Activated T-helper 2 cell treated with anti-CD3 and anti-CD28 coated beads, Interferon-gamma antibody, Interleukin-2, Interleukin-4, amounts not matched to agents 10 μg/mL and 5 μg/mL and 100 μg/mL, durations not matched to agents 14 hours and 24 hours and 36 hours (primary cell): ENCODE measurements at regions of chr19 and their contacts with region 1.

Region 1: GRCh38 chr19:43784981-43785808 is 4.4 kb upstream of the KCNN4 start:
- DNase-seq: peak; percentile 36
- H3K4me3 Mint-ChIP-seq: peak overlapping the region; percentile 55
- H3K27ac Mint-ChIP-seq: peak overlapping the region; percentile 82
- H3K4me1 Mint-ChIP-seq: peaks cover 41% of the 10 kb centered on the region
- H3K27me3 Mint-ChIP-seq: peaks cover 5% of the 10 kb centered on the region

Region 2: GRCh38 chr19:43446746-43447489 is 338.3 kb before region 1 on chr19:
- intact Hi-C with region 1: loop called (anchors 10 kb)
- DNase-seq: peak; percentile 67
- H3K4me3 Mint-ChIP-seq: no peak overlapping the region
- H3K27ac Mint-ChIP-seq: no peak overlapping the region
- H3K4me1 Mint-ChIP-seq: peaks cover 16% of the 10 kb centered on the region
- H3K27me3 Mint-ChIP-seq: no peaks in the 10 kb centered on the region

Region 3: GRCh38 chr19:43526884-43527859 is 258.0 kb before region 1 on chr19 and contains the start of gene ETHE1:
- intact Hi-C with region 1: loop called (anchors 10 kb)
- DNase-seq: peak; percentile 76
- H3K4me3 Mint-ChIP-seq: peak within 1 kb of the TSS; percentile 87
- H3K27ac Mint-ChIP-seq: peak within 1 kb of the TSS; percentile 97
- H3K4me1 Mint-ChIP-seq: peaks cover 12% of the 10 kb centered on the region
- H3K27me3 Mint-ChIP-seq: no peaks in the 10 kb centered on the region
- total RNA-seq, gene ETHE1: 64.6 and 65.5 TPM in 2 replicates

Region 4: DNA sequence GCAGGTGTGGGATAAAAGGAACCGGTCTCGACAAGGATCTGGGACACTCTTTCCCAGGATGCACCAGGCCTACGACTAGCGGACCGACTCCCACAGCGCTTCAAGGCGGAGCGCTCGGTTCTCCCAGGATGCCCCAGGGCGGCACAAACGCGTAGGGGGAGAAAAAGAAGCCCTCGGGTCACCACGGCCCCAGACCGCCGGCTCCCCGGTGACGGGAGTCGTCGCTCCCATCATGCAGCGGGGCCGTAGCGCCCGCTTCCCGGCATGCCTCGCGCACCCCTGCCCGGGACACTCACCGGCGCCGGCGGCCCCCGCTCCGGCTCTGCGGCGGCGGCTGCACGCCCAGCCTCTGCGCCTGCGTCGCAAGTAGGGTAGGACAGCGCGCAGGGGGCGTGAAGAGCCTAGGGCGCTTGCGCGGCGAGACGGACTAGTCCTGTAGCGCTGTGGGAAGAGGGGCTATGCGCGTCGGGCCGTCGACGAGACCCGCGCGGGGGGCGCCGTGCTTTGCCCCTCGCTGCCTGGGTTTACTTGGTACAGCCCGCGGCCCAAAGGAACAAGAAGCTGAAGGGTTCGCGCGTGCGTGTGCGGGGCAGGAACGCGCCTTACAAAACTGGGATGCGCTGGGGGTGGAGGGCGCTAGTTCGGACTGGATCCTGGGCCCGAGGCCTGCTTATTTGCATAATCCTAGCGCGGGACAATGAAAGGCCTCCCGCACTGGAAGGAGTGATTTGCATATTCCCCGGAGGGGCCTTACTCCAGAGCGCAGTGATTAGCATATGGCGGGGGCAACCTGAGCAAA is 165.7 kb before region 1 on chr19 and contains the start of gene ZNF428:
- intact Hi-C with region 1: no loop called
- DNase-seq: peak; percentile 86
- H3K4me3 Mint-ChIP-seq: peak within 1 kb of the TSS; percentile 90
- H3K27ac Mint-ChIP-seq: peak within 1 kb of the TSS; percentile 96
- H3K4me1 Mint-ChIP-seq: peaks cover 18% of the 10 kb centered on the region
- H3K27me3 Mint-ChIP-seq: no peaks in the 10 kb centered on the region
- total RNA-seq, gene ZNF428: 17.7 and 19.1 TPM in 2 replicates

Region 5: GRCh38 chr19:43668406-43669158 is 116.6 kb before region 1 on chr19:
- intact Hi-C with region 1: loop called (anchors 1 kb)
- DNase-seq: peak; percentile 94
- H3K4me3 Mint-ChIP-seq: peak overlapping the region; percentile 89
- H3K27ac Mint-ChIP-seq: peak overlapping the region; percentile 74
- H3K4me1 Mint-ChIP-seq: peaks cover 30% of the 10 kb centered on the region
- H3K27me3 Mint-ChIP-seq: peaks cover 9% of the 10 kb centered on the region

Region 6: GRCh38 chr19:43743022-43743421 is 42.2 kb before region 1 on chr19:
- intact Hi-C with region 1: loop called (anchors 1 kb)
- DNase-seq: no peak
- H3K4me3 Mint-ChIP-seq: no peak overlapping the region
- H3K27ac Mint-ChIP-seq: no peak overlapping the region
- H3K4me1 Mint-ChIP-seq: peaks cover 1% of the 10 kb centered on the region
- H3K27me3 Mint-ChIP-seq: no peaks in the 10 kb centered on the region

Region 7: GRCh38 chr19:43754503-43755255 is 30.5 kb before region 1 on chr19 and contains the start of gene SMG9:
- intact Hi-C with region 1: loop called (anchors 1 kb)
- DNase-seq: peak; percentile 99
- H3K4me3 Mint-ChIP-seq: peak within 1 kb of the TSS; percentile 96
- H3K27ac Mint-ChIP-seq: peak within 1 kb of the TSS; percentile 100
- H3K4me1 Mint-ChIP-seq: peaks cover 50% of the 10 kb centered on the region
- H3K27me3 Mint-ChIP-seq: no peaks in the 10 kb centered on the region
- total RNA-seq, gene SMG9: 69.1 and 73.1 TPM in 2 replicates

Region 8: GRCh38 chr19:43765109-43765876 is 19.9 kb before region 1 on chr19:
- intact Hi-C with region 1: loop called (anchors 1 kb)
- DNase-seq: peak; percentile 79
- H3K4me3 Mint-ChIP-seq: peak overlapping the region; percentile 19
- H3K27ac Mint-ChIP-seq: peak overlapping the region; percentile 74
- H3K4me1 Mint-ChIP-seq: peaks cover 63% of the 10 kb centered on the region
- H3K27me3 Mint-ChIP-seq: no peaks in the 10 kb centered on the region